Aorta (tissue), 5 donors: ENCODE measurements at regions of chr2 and their contacts with region 1.

Region 1: DNA sequence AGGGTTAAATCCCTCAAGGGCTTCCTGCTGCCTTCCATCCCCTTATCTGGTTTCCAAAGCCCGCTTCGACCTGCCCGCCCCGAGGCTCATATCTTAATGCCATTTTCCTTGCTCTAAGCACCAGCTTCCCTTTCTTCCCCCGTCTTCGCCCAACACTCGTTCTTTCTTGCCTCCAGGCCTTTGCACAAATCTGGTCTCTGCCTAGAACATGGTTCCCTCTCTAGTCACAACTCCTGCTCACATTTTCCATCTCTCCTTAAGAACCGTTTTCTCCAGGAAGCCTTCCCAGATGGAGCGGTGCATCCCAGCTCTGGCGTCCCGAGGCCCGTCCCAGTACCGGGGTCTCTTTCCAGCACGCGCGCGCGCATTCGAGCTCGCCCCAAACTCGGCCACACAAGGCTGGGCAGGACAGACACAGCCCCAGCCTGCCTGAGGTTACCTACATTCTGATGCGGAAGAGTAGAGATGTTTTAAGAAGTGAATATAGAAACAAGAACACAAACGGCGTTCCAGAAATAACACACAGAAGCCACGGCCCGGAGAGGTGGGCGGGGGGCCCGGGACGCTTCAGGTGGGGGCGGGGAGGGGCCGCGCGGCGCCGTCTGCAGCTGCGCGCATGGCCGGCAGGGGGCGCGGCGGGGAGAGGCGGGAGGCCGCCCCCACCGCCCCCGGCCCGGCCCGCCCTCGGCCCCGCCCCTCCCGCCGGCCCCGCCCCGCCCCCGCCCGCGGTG is at the start of gene DGKD:
- DNase-seq: peak; percentile 66 to 90
- ATAC-seq: peak; percentile 92
- H3K4me3 ChIP-seq: peak within 1 kb of the TSS; percentile 99
- H3K27ac ChIP-seq: no peak within 1 kb of the TSS
- H3K4me1 ChIP-seq: no peaks in the 10 kb centered on the region
- H3K27me3 ChIP-seq: no peaks in the 10 kb centered on the region
- total RNA-seq, gene DGKD: 74.3 to 250 TPM

Region 2: GRCh38 chr2:233387667-233388528 is 34.0 kb after region 1 on chr2:
- intact Hi-C with region 1: loop called in 1 of 2 experiments (anchors 5 kb)
- DNase-seq: peak; percentile 90 to 95
- ATAC-seq: peak; percentile 96
- H3K4me3 ChIP-seq: no peak overlapping the region
- H3K27ac ChIP-seq: peak overlapping the region; percentile 1 to 65
- H3K4me1 ChIP-seq: no peaks in the 10 kb centered on the region
- H3K27me3 ChIP-seq: no peaks in the 10 kb centered on the region

Region 3: DNA sequence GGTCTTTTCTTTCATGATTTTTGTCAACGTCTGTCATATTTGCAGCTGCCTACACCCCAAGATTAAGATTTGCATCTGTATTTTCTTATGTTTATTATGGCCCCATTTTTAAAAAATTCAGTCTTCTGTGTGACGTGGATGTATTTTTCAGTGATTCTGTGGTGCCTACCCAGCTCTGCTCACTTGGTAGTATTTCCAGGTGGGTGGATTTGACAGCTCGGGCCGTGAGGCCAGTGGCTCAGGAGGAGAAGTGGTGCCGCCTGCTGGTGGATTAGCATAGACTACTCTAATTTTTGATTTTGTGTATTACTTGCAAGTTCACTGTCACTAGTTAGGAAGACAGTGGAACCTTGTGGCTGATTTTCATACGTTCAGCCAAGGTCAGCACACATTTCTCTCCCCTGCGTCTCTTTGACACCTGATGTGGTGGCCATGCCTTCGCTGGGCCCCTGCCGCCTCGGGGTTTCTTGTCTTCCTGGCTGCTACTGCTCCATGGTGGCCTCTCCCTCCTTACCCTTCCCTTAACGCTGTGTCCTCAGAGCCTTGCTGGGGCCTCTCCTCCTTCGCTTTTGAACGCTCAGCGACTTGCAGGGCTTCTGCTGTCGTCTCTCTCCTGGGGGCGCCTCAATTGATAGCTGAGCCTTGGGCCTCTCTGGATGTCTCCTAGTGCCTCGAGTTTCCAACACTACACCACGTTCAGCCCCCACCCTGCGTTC is 89.7 kb after region 1 on chr2:
- intact Hi-C with region 1: loop called (anchors 2 to 5 kb)
- DNase-seq: peak; percentile 85 to 92
- ATAC-seq: peak; percentile 80
- H3K4me3 ChIP-seq: no peak overlapping the region
- H3K27ac ChIP-seq: no peak overlapping the region
- H3K4me1 ChIP-seq: no peaks in the 10 kb centered on the region
- H3K27me3 ChIP-seq: no peaks in the 10 kb centered on the region